AG04449 (cell line): ENCODE measurements at regions of chr19 and their contacts with region 1.

Region 1: GRCh38 chr19:43532962-43533545 is at the start of gene ZNF575:
- DNase-seq: peak; percentile 79
- H3K4me3 ChIP-seq: peak within 1 kb of the TSS; percentile 66
- CTCF ChIP-seq: no peak

Region 2: DNA sequence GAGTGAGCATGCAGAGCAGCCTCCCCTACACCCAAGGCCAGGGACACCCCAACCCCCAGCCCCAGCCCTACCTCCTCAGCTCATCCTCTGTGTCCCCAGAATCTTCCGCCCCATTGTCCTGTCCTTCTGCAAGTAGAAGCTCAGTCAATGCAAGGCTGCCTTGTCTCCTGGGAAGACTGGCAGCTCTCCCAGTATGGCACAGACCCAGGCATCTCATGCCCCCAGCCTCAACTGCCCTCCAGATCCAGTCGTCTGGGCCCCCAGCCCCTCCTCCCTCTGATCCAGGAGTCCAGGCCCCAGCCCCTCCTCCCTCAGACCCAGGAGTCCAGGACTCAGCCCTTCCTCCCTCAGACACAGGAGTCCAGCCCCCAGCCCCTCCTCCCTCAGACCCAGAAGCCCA is 12.9 kb after region 1 on chr19:
- CTCF ChIA-PET with region 1: interaction called, 23 read pairs
- POLR2A ChIA-PET with region 1: interaction called, 4 read pairs
- DNase-seq: no peak
- H3K4me3 ChIP-seq: no peak overlapping the region
- CTCF ChIP-seq: no peak

Region 3: DNA sequence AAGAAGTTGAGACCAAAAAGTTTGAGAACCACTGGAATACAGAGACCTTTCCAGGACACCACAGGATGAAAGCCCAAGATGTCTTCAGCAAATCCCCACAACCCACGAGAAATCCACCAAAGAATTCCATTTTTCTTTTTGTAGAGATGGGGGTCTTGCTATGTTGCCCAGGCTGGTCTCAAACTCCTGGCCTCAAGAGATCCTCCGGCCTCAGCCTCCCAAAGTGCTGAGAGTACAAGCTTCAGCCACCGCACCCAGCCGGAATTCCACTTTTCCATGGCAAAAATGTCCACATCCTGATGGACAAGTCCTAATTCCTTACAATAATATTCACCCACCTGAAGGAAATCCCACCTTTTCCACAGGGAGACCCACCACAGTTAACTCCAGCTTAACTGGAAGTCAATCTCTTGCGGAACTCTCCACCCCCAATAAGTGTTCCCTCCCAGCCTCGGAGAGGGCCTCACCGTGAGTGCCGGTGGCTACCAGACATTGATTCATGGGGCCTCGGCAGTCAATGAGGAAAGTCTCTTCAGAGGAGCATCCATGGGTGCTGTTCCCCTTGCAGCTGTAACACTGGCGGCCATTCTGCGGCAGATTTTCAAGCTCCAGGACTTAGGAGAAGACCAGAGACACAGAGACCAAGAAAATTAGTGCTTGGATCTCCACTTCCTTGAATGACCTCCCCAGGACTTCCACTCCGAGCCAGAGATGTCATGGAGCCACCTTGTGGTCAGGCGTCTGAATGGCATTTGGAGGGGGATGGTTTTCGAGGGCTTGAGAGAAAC is 118.9 kb after region 1 on chr19:
- CTCF ChIA-PET with region 1: interaction called, 23 read pairs
- POLR2A ChIA-PET with region 1: no interaction called
- DNase-seq: no peak
- H3K4me3 ChIP-seq: no peak overlapping the region
- CTCF ChIP-seq: peak; percentile 83